Activated CD8-positive, alpha-beta T cell treated with anti-CD3 and anti-CD28 coated beads, Interleukin-2, amount 10 ng/mL, durations not matched to agents 7 days and 5 days (primary cell): ENCODE measurements at regions of chr4 and their contacts with region 1.

Region 1: DNA sequence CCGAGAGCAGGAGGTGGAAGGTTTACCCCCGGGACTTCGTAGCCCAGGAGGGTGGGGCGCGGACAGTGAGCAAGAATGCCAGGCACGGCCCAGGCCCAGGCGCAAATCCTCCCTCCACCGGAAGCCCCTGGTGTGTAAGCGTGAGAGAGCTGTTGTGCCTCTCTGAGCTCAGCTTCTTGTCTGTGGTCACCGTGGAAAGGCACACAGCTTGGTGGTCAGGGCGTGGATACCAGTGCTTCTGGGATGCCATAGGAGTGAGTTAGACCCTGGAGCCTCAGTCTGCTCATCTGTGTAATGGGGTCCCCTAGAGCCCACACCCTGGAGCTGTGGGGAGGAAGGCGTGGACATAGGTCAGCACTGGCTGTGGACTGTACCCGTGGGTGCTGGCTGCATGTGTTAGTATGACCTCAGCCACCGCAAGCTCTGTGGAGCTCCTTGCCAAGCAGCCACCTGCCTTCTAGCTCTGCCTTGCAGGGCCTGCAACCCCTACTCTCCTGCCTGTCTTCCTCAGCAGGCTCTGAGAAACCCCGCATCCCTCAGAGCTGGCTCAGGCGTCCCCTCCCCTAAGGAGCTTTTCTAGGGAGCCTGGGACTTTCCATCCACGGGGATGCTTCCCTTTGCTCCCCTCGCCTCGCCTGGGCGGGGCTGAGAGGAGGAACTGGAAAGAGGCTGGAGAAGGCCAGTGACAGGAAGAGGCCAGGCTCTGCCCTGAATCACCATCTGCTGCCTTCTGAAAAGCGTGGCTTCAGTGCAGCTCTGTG is 28.0 kb upstream of the AFAP1 start:
- DNase-seq: no peak
- ATAC-seq: no peak
- H3K4me3 Mint-ChIP-seq: no peak overlapping the region
- H3K27ac Mint-ChIP-seq: no peak overlapping the region
- H3K4me1 Mint-ChIP-seq: peaks cover 71% of the 10 kb centered on the region
- H3K27me3 Mint-ChIP-seq: peaks cover 2% of the 10 kb centered on the region

Region 2: DNA sequence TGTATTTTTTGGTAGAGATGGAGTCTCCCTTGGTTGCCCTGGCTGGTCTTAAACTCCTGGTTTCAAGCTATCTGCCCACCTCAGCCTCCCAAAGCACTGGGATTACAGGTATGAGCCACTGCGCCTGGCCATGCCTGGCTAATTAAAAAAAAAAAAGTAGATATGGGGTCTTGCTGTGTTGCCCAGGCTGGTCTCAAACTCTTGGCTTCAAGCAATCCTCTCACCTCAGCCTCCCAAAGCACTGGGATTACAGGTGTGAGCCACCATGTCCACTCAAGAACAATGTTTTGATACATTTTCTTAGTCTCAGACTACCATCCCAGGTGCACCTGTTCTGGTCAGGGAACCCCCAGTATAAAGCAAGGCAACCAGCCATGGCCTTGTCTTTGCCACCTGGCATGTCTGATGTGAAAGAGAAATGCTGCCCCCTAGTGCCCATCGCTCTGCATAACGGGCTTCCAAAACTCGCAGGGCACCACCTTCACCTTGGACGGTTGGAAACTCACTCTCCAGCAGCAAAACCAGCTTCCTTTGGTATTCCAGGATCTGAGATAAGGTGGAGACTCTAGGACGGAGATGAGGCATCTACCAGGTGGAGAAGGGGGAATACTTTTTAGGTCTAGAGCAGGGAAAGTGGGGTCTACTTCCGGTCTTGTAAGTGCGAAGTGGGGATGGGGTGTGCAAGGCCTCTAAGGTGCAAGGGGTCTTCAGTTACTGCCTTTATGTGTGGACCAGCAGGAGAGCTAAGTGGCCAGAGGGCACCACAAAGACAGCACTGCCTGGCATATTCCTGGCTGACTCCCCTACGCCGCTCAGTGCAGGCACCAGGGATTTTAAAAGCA is 19.7 kb after region 1 on chr4:
- CTCF ChIA-PET with region 1: interaction called, 11 read pairs
- POLR2A ChIA-PET with region 1: interaction called, 3 read pairs
- DNase-seq: peak; percentile 85
- ATAC-seq: peak; percentile 90
- H3K4me3 Mint-ChIP-seq: no peak overlapping the region
- H3K27ac Mint-ChIP-seq: no peak overlapping the region
- H3K4me1 Mint-ChIP-seq: peaks cover 10% of the 10 kb centered on the region
- H3K27me3 Mint-ChIP-seq: peaks cover 2% of the 10 kb centered on the region